ENCODE measurements at regions of chr6 and their contacts with region 1.

Region 1: GRCh38 chr6:1604158-1605030 is 5.3 kb upstream of the FOXC1 start:
- DNase-seq: peak in 5 of 10 donors; percentile 44 to 92 (median 52)

Region 2: DNA sequence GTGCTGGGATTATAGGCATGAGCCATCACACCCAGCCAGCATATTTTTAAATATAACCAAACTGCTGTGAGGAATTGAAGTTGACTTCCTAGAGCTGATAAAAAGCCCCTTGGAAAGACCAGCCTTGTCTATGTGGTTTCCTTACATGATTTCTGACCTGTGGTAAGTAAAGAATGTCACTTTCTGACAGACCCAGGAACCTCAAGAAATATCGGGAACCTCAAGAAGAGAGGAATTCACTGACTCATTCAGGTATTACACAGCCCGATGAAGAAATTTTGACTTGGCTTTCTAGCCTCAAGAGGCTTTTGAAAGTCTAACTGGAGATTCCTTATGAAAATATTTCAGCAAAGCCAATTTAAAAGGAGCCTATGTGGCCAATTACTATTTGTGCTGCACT is 143.2 kb before region 1 on chr6:
- intact Hi-C with region 1: no loop called
- DNase-seq: no peak

Region 3: DNA sequence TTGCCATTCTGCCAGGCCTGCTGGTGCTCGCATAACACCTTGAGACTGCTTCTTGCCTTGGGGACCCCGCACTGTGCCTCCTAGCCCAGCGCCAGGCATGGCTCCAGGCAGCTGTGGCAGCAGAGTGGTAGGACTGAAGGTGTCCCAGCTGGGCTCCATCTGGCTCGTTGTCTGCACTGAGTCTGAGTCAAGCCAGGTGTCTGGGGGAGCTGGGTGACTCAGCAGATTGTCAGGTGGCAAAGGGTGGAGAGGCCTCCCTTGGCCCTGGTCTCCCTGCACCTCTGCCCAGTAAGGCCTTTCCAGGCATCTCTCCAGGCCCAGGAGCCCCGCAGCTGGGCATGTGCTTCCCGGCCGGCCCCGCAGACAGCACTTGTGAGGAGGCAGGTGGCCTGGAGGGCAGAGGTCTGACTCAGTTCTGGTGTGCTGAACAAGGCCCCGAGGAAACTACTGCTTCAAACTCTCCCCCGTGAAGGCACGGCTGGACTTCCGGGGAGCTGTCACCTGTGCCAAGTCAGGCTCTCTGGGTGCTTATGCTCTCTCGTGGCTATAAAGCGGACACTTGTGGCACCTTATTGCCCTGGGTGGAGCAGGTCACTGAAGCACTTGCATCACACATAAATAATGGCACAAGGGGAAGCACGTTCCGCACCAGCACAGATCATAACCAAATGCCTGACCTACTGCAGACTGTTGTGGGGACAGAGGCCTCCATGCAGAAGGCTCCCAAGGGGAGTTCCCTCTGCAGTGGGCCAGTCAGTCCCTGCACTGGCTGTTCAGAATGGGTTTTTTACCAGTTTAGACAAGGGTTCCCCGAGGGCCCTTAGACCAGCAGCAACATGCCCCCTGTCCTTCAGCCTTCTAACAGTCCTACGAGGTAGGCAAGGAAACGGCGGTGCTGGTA is 32.8 kb after region 1 on chr6:
- intact Hi-C with region 1: no loop called
- DNase-seq: peak in 3 of 10 donors; percentile 67 to 74 (median 68)

Region 4: GRCh38 chr6:1821513-1822183 is 217.3 kb after region 1 on chr6:
- intact Hi-C with region 1: no loop called
- DNase-seq: no peak

Region 5: GRCh38 chr6:1850121-1850839 is 245.9 kb after region 1 on chr6:
- intact Hi-C with region 1: no loop called
- DNase-seq: no peak

Region 6: GRCh38 chr6:2103644-2104523 is 499.5 kb after region 1 on chr6:
- intact Hi-C with region 1: loop called (anchors 1 kb)
- DNase-seq: no peak

Region 7: DNA sequence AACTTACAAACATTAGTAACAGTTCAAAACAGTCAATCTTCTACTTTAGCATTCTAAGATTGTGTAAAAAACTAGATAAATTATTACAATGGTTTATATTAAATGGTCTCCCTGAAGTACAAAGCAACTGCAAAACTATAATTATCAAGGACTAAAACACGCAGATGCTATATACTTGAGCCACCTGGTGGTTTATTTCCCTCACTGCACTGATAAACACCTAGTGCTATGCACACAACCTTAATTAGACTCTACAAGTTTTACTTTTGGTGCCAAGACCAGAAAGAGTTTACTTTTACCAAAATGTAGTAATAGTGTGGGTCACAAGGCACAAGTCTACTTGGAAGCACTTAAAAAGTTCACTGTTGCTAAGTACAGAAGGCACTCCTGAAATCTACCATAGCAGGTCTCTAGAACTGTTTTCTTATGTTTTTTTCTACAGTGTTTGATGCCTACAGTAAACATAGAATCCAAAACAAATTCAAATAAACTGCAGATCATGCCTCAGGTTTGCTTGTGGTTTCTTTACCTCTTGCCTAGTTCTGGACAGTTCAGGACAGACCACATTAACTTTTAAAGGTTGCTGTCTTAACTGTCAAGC is 591.8 kb after region 1 on chr6:
- intact Hi-C with region 1: loop called (anchors 2 kb)
- DNase-seq: no peak

Region 8: DNA sequence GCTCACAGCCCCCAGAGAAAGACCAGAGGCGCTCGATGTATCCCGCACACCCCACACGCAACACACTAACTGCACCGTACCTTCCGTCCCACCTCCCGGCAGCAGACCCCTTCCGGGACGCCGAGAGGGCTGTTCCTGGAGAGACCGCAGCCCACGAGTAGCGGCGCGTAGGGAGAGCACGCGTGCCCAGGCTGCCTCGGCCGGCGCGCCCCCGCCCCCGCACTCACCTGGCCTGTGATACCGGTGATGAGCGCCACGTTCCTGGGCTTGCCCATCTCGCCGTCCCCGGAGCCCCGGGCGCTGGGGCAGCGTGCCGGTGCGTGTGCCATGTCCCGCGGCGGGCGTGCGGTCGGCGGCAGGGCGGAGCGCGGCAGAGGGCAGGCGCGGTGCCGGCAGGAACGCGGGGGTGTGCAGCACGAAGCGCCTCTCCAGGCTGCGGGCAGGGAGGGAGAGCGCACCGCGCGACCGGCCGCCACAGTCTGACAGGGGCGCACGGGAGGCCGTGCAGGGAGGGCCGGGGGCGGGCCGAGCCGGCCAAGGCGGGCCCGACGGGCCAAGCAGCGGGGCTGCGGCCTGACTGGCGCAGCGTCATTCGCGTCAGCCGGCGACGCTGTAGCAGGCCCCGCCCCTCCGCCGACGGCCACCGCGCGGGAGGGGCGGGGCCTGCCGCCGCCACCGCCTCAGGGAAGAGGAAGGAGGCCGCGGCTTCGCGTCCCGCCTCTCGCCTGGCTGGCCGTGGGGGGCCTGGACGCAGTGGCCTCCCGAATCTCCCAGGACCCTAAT is 640.9 kb after region 1 on chr6 and contains the start of gene GMDS:
- intact Hi-C with region 1: loop called (anchors 5 kb)
- DNase-seq: peak; percentile 70 to 98 (median 79)

Region 9: GRCh38 chr6:2353412-2354137 is 749.2 kb after region 1 on chr6:
- intact Hi-C with region 1: loop called (anchors 1 kb)
- DNase-seq: peak in 6 of 10 donors; percentile 48 to 89 (median 56)

Region 10: DNA sequence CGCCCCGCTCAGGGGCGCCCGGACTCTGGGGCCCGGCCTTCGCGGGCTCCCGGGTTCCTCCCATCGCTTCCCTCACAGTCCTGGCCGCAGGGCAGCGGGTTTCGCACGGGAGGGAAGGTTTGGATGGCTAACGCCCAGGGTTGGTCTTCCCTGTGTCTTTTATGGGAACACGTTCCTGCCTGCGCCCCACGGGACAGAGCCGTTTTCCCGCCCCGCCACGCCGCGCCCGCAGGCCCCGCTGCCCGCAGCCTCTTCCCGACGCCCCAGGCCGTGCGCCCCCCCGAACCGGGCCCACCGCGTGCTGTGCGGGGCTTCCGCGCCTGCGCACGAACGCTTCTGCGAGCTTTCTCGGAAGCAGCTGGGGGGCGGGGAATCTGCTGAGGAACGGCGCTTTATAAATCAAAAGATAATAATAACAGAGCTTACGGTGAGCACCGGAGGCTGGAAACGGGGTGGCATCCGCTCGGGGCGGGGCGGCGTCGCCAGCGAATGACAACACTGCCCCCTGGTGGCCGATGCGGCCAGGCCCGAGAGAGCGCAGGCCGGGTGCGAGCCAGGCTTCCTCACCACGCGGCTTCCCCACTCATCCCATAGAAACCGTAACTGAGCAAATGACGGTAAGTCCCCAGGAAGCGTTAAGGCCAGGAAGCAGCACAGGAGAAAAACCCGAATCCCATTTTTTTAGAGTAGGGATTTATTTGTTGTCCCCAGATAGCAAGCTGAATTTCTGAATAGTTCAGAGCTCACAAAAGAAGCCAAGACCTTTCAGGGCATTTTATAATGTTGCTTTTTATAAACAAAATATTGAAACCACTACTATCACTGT is 1030.0 kb after region 1 on chr6:
- intact Hi-C with region 1: loop called (anchors 2 kb)
- DNase-seq: peak; percentile 64 to 97 (median 82)

Region 11: GRCh38 chr6:2695454-2696095 is 1091.2 kb after region 1 on chr6:
- intact Hi-C with region 1: loop called (anchors 5 kb)
- DNase-seq: no peak